Naive thymus-derived CD4-positive, alpha-beta T cell (primary cell): ENCODE measurements at regions of chr10 and their contacts with region 1.

Region 1: GRCh38 chr10:132458593-132459300 is 61.7 kb downstream of the PWWP2B start:
- DNase-seq: peak; percentile 41 to 85 (median 67)
- ATAC-seq: peak; percentile 89
- H3K4me3 ChIP-seq: no peak overlapping the region
- H3K4me3 Mint-ChIP-seq: peak overlapping the region in 2 of 10 donors; percentile 10 to 30
- H3K27ac ChIP-seq: no peak overlapping the region
- H3K27ac Mint-ChIP-seq: peak overlapping the region in 1 of 9 donors; percentile 60
- H3K4me1 ChIP-seq: no peaks in the 10 kb centered on the region
- H3K4me1 Mint-ChIP-seq: peaks cover 0 to 6% (median 0%) of the 10 kb centered on the region in 7 donors
- H3K27me3 ChIP-seq: no peaks in the 10 kb centered on the region
- H3K27me3 Mint-ChIP-seq: no peaks in the 10 kb centered on the region

Region 2: GRCh38 chr10:132551093-132551807 is 92.5 kb after region 1 on chr10:
- CTCF ChIA-PET with region 1: interaction called, 5 read pairs
- POLR2A ChIA-PET with region 1: interaction called, 3 read pairs
- intact Hi-C with region 1: loop called in 1 of 2 experiments (anchors 1 kb)
- DNase-seq: peak in 4 of 9 donors; percentile 41 to 53 (median 50)
- ATAC-seq: peak; percentile 67
- H3K4me3 ChIP-seq: peak overlapping the region; percentile 51
- H3K4me3 Mint-ChIP-seq: peak overlapping the region in 9 of 10 donors; percentile 72 to 88 (median 80)
- H3K27ac ChIP-seq: peak overlapping the region; percentile 57
- H3K27ac Mint-ChIP-seq: peak overlapping the region; percentile 66 to 95 (median 79)
- H3K4me1 ChIP-seq: peaks cover 18 to 52% of the 10 kb centered on the region in 2 donors
- H3K4me1 Mint-ChIP-seq: peaks cover 29 to 51% (median 34%) of the 10 kb centered on the region in 7 donors
- H3K27me3 ChIP-seq: no peaks in the 10 kb centered on the region
- H3K27me3 Mint-ChIP-seq: no peaks in the 10 kb centered on the region

Region 3: DNA sequence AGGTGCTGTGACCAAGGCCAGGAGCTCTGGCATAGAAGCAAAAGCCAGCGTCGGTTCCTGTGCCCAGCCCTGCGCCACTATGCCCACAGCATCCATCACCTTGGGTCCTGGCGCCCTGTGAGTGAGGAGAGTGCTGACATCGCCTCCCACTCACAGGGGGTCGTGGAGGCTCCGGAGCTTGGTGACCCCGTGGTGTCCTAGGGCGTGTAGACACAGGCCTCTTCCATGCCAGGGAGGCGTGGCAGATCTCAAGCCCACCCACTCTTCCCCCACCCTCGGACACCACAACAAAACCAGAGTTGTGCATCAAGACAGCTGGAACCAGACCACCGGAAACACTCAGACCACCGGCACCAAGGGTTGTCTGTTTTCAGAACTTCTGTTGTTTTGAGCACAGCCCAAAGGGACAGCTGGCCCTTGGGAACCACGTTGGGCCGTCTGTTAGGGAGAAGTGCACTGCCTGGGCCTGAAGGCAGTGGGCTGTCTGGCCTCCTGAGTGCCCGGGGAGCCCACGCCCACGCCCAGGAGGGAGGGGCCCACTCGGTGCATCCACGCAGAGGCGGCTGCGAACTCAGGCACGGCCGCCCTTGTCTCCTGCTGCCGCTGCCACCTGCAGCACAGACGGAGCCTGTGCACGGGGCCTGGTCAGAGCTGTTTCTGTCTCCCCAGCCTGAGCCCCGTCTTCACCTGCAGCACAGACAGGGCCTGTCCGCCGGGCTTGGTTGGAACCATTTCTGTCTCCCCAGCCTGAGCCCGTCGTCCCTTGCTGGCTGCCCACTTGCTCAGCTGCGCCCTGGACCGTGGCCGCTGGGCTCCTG is 185.2 kb after region 1 on chr10:
- CTCF ChIA-PET with region 1: interaction called, 18 read pairs
- POLR2A ChIA-PET with region 1: no interaction called
- intact Hi-C with region 1: no loop called
- DNase-seq: no peak
- ATAC-seq: no peak
- H3K4me3 ChIP-seq: no peak overlapping the region
- H3K4me3 Mint-ChIP-seq: no peak overlapping the region
- H3K27ac ChIP-seq: no peak overlapping the region
- H3K27ac Mint-ChIP-seq: no peak overlapping the region
- H3K4me1 ChIP-seq: no peaks in the 10 kb centered on the region
- H3K4me1 Mint-ChIP-seq: peaks cover 6 to 46% (median 28%) of the 10 kb centered on the region in 7 donors
- H3K27me3 ChIP-seq: no peaks in the 10 kb centered on the region
- H3K27me3 Mint-ChIP-seq: peaks cover 0 to 4% (median 0%) of the 10 kb centered on the region in 5 donors